Caco-2 (cell line): ENCODE measurements at regions of chr13 and their contacts with region 1.

Region 1: GRCh38 chr13:26498656-26499591 is 58.6 kb upstream of the WASF3 start:
- DNase-seq: peak; percentile 51 to 57
- H3K4me3 ChIP-seq: no peak overlapping the region
- H3K4me3 Mint-ChIP-seq: no peak overlapping the region
- H3K27ac Mint-ChIP-seq: no peak overlapping the region
- H3K4me1 ChIP-seq: no peaks in the 10 kb centered on the region
- H3K4me1 Mint-ChIP-seq: no peaks in the 10 kb centered on the region
- H3K27me3 ChIP-seq: no peaks in the 10 kb centered on the region
- H3K27me3 Mint-ChIP-seq: peaks cover 4% of the 10 kb centered on the region
- CTCF ChIP-seq: peak; percentile 12 to 50

Region 2: DNA sequence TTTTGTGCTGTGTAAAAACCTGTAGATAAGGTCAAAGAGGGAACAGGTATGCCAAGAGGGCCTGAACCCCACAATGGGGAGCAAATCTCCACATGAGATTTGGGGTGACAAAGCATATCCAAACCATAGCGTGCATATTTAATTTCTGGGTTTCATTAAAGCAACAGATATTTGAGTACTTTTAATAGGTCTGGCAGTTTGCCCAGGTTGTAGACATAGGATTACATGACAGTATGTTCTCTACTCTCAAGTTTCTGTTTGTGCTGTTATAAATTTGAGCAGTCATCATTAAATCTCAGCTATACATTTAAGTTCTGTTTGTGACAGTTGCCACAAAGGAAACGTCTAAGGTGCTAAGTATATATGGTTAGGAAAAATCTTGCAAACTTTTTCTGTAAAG is 890.7 kb before region 1 on chr13:
- CTCF ChIA-PET with region 1: no interaction called
- POLR2A ChIA-PET with region 1: no interaction called
- intact Hi-C with region 1: no loop called
- DNase-seq: no peak
- H3K4me3 ChIP-seq: no peak overlapping the region
- H3K4me3 Mint-ChIP-seq: no peak overlapping the region
- H3K27ac Mint-ChIP-seq: no peak overlapping the region
- H3K4me1 ChIP-seq: no peaks in the 10 kb centered on the region
- H3K4me1 Mint-ChIP-seq: no peaks in the 10 kb centered on the region
- H3K27me3 ChIP-seq: no peaks in the 10 kb centered on the region
- H3K27me3 Mint-ChIP-seq: peaks cover 9% of the 10 kb centered on the region
- CTCF ChIP-seq: no peak

Region 3: GRCh38 chr13:26377038-26377437 is 121.9 kb before region 1 on chr13:
- CTCF ChIA-PET with region 1: no interaction called
- POLR2A ChIA-PET with region 1: no interaction called
- intact Hi-C with region 1: loop called (anchors 5 kb)
- DNase-seq: peak; percentile 43 to 57
- H3K4me3 ChIP-seq: no peak overlapping the region
- H3K4me3 Mint-ChIP-seq: no peak overlapping the region
- H3K27ac Mint-ChIP-seq: no peak overlapping the region
- H3K4me1 ChIP-seq: 0 out of 2 replicates have a peak, but pooled peaks cover 4% of the 10 kb centered on the region
- H3K4me1 Mint-ChIP-seq: no peaks in the 10 kb centered on the region
- H3K27me3 ChIP-seq: no peaks in the 10 kb centered on the region
- H3K27me3 Mint-ChIP-seq: no peaks in the 10 kb centered on the region
- CTCF ChIP-seq: peak; percentile 47 to 68

Region 4: GRCh38 chr13:26628706-26629105 is 129.8 kb after region 1 on chr13:
- CTCF ChIA-PET with region 1: interaction called, 4 read pairs
- POLR2A ChIA-PET with region 1: no interaction called
- intact Hi-C with region 1: loop called (anchors 5 kb)
- DNase-seq: peak in 1 of 2 experiments; percentile 42
- H3K4me3 ChIP-seq: no peak overlapping the region
- H3K4me3 Mint-ChIP-seq: no peak overlapping the region
- H3K27ac Mint-ChIP-seq: no peak overlapping the region
- H3K4me1 ChIP-seq: no peaks in the 10 kb centered on the region
- H3K4me1 Mint-ChIP-seq: no peaks in the 10 kb centered on the region
- H3K27me3 ChIP-seq: no peaks in the 10 kb centered on the region
- H3K27me3 Mint-ChIP-seq: peaks cover 8% of the 10 kb centered on the region
- CTCF ChIP-seq: peak in 1 of 2 experiments; percentile 29